Upper lobe of right lung (tissue), 1 donor: ENCODE measurements at regions of chr20 and their contacts with region 1.

Region 1: DNA sequence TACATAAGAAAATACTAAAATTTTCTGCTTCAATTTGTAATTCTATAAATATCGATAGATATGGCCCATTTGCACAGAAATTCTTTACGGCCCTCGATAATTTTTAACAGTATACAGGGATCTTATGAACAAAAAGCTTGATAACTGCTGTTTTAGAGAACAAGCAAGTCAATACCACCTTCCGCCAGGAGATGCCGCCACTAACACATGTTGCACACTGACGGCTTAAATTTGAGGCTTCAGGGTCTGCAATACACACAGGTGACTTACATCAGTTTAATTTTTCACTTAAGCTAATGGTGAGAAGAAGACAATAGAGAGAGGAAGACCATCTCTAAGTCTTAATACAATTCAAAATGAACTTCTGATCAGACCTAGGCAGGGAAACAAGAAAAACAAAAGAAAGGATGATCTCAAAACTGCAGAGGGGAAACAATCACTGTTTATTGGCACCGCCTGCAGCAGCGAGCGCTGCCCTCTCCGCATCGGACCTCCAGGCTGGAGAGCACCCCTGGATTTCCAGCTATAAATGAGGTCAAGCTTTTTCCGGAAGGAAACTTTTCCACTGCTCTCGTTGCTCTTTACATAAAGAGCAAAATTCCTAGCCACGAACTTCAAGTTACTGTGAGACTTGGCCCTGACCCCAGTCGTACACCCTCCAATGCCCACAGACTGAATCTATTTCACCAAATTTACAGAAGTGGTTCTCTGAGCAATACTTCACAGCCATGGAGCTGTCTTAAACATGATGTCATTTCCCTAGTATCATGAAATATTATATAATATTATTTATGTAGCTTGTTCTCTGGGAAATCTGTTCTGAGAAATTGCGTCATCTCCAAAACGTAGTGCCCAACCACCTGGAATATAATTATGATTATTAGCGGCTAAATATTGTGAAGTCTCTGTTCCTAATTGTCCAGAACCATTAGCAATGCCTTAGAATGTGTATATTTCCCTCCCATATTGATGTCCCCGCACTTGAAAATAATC is 54.1 kb downstream of the OTOR start:
- DNase-seq: peak; percentile 74
- ATAC-seq: peak; percentile 82
- H3K4me3 ChIP-seq: no peak overlapping the region
- H3K27ac ChIP-seq: no peak overlapping the region
- H3K4me1 ChIP-seq: no peaks in the 10 kb centered on the region
- H3K27me3 ChIP-seq: peaks cover 26% of the 10 kb centered on the region
- CTCF ChIP-seq: peak; percentile 91

Region 2: DNA sequence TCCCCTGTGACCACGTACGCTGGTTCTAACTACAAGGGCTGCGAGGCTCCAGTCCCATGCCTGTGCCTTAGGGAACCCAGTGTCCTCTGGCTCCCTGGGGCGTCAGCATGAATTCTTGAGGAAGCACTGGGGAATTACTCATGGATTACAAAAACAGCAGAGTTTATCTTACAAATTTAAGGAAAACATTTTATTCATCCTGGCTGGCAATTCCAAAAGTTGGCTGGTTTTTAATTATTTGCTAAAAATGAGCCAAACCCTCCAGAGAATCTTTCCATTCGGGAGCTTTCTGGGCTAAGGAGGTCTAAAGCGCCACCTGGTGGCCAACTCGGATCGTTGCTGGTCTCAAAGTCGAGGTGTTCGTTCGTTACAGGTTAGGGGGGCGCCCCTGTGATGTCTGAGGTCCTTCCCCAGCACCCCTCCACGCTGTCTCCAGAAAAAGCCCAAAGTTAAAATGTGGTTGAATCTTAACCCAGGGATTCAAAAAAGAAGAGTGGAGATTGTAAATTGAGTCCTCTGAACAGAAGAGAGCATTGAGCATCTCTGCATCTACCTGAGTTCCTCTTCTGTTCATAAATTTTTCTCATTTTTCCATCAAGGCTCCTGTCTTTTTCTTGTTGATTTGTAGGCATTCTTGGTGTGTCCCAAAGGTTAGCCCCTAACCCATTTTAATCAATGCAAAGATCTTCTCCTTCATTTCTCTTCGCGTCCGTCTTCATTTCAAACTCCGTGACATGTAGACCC is 629.6 kb after region 1 on chr20:
- intact Hi-C with region 1: loop called (anchors 10 kb)
- DNase-seq: peak; percentile 73
- ATAC-seq: peak; percentile 72
- H3K4me3 ChIP-seq: no peak overlapping the region
- H3K27ac ChIP-seq: no peak overlapping the region
- H3K4me1 ChIP-seq: no peaks in the 10 kb centered on the region
- H3K27me3 ChIP-seq: no peaks in the 10 kb centered on the region
- CTCF ChIP-seq: peak; percentile 88